ENCODE measurements at regions of chr18 and their contacts with region 1.

Region 1: DNA sequence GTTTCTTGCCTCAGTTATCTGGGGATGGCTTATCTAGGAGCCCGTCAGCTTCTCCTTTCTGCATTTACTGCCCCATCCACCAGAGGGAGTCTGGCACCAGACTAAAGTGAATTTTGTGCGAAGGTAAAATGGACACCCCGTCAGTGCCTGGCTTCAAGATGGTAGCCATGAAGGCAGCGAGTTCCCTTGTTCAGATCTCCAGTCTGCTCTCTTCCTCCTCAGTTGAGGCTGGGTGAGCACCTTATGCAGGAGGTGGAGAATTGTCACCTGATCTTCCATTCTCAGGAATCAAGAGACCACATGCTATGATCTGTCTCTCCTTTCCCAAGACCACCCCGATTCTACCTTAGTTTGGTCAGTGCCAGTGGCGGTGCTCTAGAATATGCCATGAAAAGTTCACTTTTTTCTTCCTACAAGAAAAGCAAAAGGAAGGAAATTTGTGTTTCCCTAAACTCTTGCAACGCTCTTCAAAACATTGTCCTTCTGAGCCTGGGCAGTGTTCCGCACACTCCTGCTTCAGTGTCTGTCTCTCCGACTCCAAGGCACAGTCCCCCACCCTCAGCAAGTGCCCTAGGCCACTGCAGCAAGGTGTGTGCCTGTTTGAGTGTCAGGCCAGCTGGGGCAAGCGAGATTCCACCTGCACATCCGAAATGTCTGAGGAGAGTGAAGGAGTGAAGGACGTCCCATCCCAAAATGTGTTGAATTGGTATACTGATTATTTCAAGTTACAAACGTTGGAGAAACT is 168.6 kb downstream of the SS18 start:
- DNase-seq: peak; percentile 74 to 85 (median 80)
- ATAC-seq: peak; percentile 96
- H3K4me3 ChIP-seq: no peak overlapping the region
- H3K27ac ChIP-seq: no peak overlapping the region
- H3K4me1 ChIP-seq: no peaks in the 10 kb centered on the region; a peak in 1 of 5 replicates
- H3K27me3 ChIP-seq: peaks cover 0 to 6% of the 10 kb centered on the region in 2 experiments; a peak in 1 of 5 replicates
- CTCF ChIP-seq: peak; percentile 88 to 96 (median 94)
- EP300 ChIP-seq: peak; percentile 20; the same call in 1 of the 2 replicates
- POLR2A ChIP-seq: no peak
- RAD21 ChIP-seq: peak; percentile 86 to 90

Region 2: GRCh38 chr18:26017929-26018328 is 96.1 kb after region 1 on chr18:
- CTCF ChIA-PET with region 1: interaction called, 7 read pairs
- POLR2A ChIA-PET with region 1: no interaction called
- in situ Hi-C with region 1: no loop called
- intact Hi-C with region 1: loop called (anchors 2 kb)
- DNase-seq: no peak
- ATAC-seq: peak; percentile 38; the same call in 1 of the 3 replicates
- H3K4me3 ChIP-seq: no peak overlapping the region
- H3K27ac ChIP-seq: no peak overlapping the region
- H3K4me1 ChIP-seq: no peaks in the 10 kb centered on the region
- H3K27me3 ChIP-seq: no peaks in the 10 kb centered on the region
- CTCF ChIP-seq: peak in 1 of 3 experiments; percentile 32; a peak in 1 of 6 replicates
- EP300 ChIP-seq: no peak
- POLR2A ChIP-seq: no peak
- RAD21 ChIP-seq: peak in 1 of 2 experiments; percentile 40; a peak in 2 of 4 replicates

Region 3: DNA sequence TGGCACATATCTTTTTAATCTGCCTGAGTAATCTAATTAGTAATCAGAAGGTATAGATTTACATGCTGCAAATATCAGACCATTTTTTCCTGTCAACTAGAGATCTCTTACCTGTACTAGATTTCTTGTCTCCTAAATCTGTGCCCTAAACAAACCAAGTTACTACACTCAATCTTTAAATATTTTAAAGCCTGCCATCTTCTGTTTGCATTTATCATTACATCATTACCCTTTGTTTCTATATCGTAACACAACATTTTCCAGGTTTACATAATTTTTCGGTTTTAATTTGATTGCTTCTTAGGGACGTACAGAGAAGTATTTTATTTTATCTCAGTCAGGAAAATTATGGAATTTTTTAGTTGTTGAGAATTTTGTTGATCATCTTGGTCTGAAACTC is 237.5 kb after region 1 on chr18:
- CTCF ChIA-PET with region 1: interaction called, 17 read pairs
- POLR2A ChIA-PET with region 1: no interaction called
- in situ Hi-C with region 1: no loop called
- intact Hi-C with region 1: loop called (anchors 2 kb)
- DNase-seq: peak in 2 of 4 experiments; percentile 6 to 22
- ATAC-seq: peak; percentile 65
- H3K4me3 ChIP-seq: no peak overlapping the region
- H3K27ac ChIP-seq: no peak overlapping the region
- H3K4me1 ChIP-seq: no peaks in the 10 kb centered on the region
- H3K27me3 ChIP-seq: no peaks in the 10 kb centered on the region; a peak in 1 of 5 replicates
- CTCF ChIP-seq: peak in 1 of 3 experiments; percentile 35; a peak in 2 of 6 replicates
- EP300 ChIP-seq: no peak
- POLR2A ChIP-seq: no peak
- RAD21 ChIP-seq: peak; percentile 13 to 56; a peak in 2 of 4 replicates

Region 4: DNA sequence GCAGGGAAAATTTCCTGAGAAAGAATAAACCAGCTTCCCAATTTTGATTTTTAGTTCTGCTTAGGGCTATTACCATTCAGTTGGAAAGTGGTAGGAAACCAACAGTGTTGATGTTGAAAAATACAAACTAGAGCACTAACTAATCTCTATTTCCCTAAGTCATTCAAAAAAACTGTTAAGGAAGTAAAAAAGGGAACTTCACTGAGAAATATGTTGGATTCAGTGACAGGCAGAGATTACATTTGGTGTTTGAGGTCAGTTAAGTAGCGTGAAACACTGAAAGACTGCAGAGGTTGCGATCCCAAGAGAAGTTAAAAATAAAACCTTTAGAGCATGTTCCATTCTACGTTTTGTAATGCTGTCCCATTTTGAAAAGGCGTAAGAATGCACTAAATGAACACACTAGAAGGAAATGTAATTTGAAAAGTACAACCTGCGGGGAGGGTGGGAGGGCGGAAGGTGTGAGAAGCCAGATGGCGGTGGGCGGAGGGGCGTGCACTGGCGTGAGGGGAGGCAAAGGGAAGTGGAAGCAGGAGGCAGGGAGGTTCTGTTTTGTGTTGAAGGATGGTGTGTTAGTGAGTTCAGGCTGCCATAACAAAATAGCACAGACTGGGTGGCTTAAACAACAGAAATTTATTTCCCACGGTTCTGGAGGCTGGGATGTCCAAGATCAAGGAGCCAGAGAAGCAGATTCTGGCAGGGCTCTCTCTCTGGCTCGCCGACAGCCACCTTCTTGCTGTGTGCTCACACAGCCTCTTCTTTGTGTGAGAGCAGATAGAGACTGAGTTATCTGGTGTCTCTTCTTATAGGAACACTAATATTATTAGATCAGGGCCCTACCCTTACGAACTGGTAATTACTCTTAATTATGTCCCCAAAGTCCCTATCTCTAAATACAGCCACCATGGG is 720.8 kb after region 1 on chr18:
- CTCF ChIA-PET with region 1: no interaction called
- POLR2A ChIA-PET with region 1: no interaction called
- in situ Hi-C with region 1: no loop called
- intact Hi-C with region 1: loop called (anchors 10 kb)
- DNase-seq: no peak
- ATAC-seq: no peak
- H3K4me3 ChIP-seq: no peak overlapping the region
- H3K27ac ChIP-seq: no peak overlapping the region
- H3K4me1 ChIP-seq: no peaks in the 10 kb centered on the region
- H3K27me3 ChIP-seq: no peaks in the 10 kb centered on the region
- CTCF ChIP-seq: no peak
- EP300 ChIP-seq: no peak
- POLR2A ChIP-seq: no peak
- RAD21 ChIP-seq: no peak

Measured in K562 (cell line).